Psoas muscle (tissue), 8 donors: ENCODE measurements at regions of chr2 and their contacts with region 1.

Region 1: GRCh38 chr2:161586517-161587167 is 37.6 kb upstream of the SLC4A10 start:
- DNase-seq: no peak
- ATAC-seq: no peak
- H3K4me3 ChIP-seq: no peak overlapping the region
- H3K27ac ChIP-seq: no peak overlapping the region
- H3K4me1 ChIP-seq: no peaks in the 10 kb centered on the region
- H3K27me3 ChIP-seq: peaks cover 0 to 3% (median 0%) of the 10 kb centered on the region in 3 donors
- CTCF ChIP-seq: peak; percentile 42

Region 2: GRCh38 chr2:161946489-161947107 is 360.0 kb after region 1 on chr2:
- intact Hi-C with region 1: loop called in 1 of 2 experiments (anchors 1 kb)
- DNase-seq: no peak
- ATAC-seq: no peak
- H3K4me3 ChIP-seq: no peak overlapping the region
- H3K27ac ChIP-seq: no peak overlapping the region
- H3K4me1 ChIP-seq: no peaks in the 10 kb centered on the region
- H3K27me3 ChIP-seq: no peaks in the 10 kb centered on the region
- CTCF ChIP-seq: no peak

Region 3: GRCh38 chr2:162926501-162926900 is 1339.9 kb after region 1 on chr2:
- intact Hi-C with region 1: no loop called
- DNase-seq: no peak
- ATAC-seq: no peak
- H3K4me3 ChIP-seq: no peak overlapping the region
- H3K27ac ChIP-seq: no peak overlapping the region
- H3K4me1 ChIP-seq: no peaks in the 10 kb centered on the region
- H3K27me3 ChIP-seq: no peaks in the 10 kb centered on the region
- CTCF ChIP-seq: no peak